ENCODE measurements at regions of chr19 and their contacts with region 1.

Region 1: GRCh38 chr19:58326914-58327726 is at the start of gene ZSCAN22:
- DNase-seq: peak; percentile 97
- ATAC-seq: peak; percentile 95
- H3K4me3 Mint-ChIP-seq: no peak within 1 kb of the TSS
- H3K27ac Mint-ChIP-seq: no peak within 1 kb of the TSS
- H3K4me1 Mint-ChIP-seq: peaks cover 4% of the 10 kb centered on the region; the same call in 1 of the 2 replicates
- H3K27me3 Mint-ChIP-seq: no peaks in the 10 kb centered on the region
- CTCF ChIP-seq: no peak
- total RNA-seq, gene ZSCAN22: 3.2 TPM in 3 replicates

Region 2: GRCh38 chr19:58285947-58286346 is 41.2 kb before region 1 on chr19:
- CTCF ChIA-PET with region 1: no interaction called
- POLR2A ChIA-PET with region 1: no interaction called
- DNase-seq: no peak
- ATAC-seq: no peak
- H3K4me3 Mint-ChIP-seq: no peak overlapping the region
- H3K27ac Mint-ChIP-seq: no peak overlapping the region
- H3K4me1 Mint-ChIP-seq: peaks cover 5% of the 10 kb centered on the region
- H3K27me3 Mint-ChIP-seq: no peaks in the 10 kb centered on the region
- CTCF ChIP-seq: no peak

Region 3: DNA sequence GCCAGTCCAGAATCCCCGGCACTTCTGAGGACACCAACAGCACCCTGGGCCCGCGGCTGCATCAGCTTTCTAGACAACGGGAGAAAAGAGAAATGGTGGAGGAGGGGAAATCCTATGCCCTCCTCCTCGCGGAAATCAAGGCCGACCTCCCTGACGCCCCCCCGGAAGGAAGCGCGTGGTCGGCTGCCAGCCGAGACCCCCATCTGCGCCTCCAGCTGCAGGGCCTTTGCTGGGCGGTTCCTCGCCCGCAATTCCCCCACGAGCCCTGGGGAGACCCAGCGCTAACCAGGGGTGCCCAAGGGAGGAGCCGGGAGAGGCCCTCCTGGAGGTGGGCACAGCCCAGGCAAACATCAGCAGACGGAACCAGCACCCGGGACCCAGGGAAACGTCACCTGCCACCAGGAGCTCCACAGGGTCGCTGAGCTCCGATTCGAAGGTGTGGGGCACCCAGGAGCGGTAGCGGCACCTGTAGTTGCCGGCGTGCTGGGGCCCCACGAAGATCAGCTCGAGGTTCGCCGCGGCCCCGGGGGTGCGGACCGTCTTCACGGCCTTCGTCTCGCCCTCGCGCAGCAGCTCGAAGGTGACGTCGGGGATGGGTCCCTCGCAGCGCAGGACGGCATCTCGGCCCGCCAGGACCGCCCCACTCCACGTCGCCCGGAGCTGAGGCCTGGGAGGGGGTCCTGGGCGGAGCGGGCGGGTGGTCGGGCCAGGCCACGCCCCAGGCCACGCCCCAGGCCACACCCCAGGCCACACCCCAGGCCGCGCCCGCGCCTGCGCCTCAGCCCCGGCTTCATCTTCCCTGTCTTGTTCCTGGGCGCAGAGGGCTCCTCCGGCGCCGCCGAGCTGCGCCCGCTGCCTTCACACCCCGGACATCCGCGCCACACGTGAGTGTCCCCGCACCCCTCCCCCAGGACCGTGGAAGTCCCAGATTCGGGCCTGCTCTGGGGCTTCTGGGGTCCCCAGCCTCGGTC is 20.1 kb after region 1 on chr19:
- CTCF ChIA-PET with region 1: interaction called, 10 read pairs
- POLR2A ChIA-PET with region 1: no interaction called
- DNase-seq: peak; percentile 67
- ATAC-seq: peak; percentile 96
- H3K4me3 Mint-ChIP-seq: peak overlapping the region; percentile 93
- H3K27ac Mint-ChIP-seq: no peak overlapping the region
- H3K4me1 Mint-ChIP-seq: peaks cover 3% of the 10 kb centered on the region; the same call in 1 of the 2 replicates
- H3K27me3 Mint-ChIP-seq: peaks cover 57% of the 10 kb centered on the region
- CTCF ChIP-seq: no peak

Region 4: GRCh38 chr19:58362272-58362994 is 35.3 kb after region 1 on chr19 and contains the start of gene ZNF497:
- CTCF ChIA-PET with region 1: interaction called, 12 read pairs
- POLR2A ChIA-PET with region 1: interaction called, 9 read pairs
- DNase-seq: peak; percentile 98
- ATAC-seq: peak; percentile 93
- H3K4me3 Mint-ChIP-seq: peak within 1 kb of the TSS; percentile 94
- H3K27ac Mint-ChIP-seq: peak within 1 kb of the TSS; percentile 96
- H3K4me1 Mint-ChIP-seq: peaks cover 6% of the 10 kb centered on the region; the same call in 1 of the 2 replicates
- H3K27me3 Mint-ChIP-seq: no peaks in the 10 kb centered on the region
- CTCF ChIP-seq: no peak
- total RNA-seq, gene ZNF497: 1.7 to 2.1 TPM (median 2.0 TPM) in 3 replicates

Region 5: GRCh38 chr19:58372311-58373133 is 45.4 kb after region 1 on chr19:
- CTCF ChIA-PET with region 1: no interaction called
- POLR2A ChIA-PET with region 1: interaction called, 10 read pairs
- DNase-seq: no peak
- ATAC-seq: peak; percentile 52
- H3K4me3 Mint-ChIP-seq: no peak overlapping the region
- H3K27ac Mint-ChIP-seq: 0 out of 2 replicates have a peak overlapping the region, but pooled peaks have one; percentile 54
- H3K4me1 Mint-ChIP-seq: peaks cover 2% of the 10 kb centered on the region; the same call in 1 of the 2 replicates
- H3K27me3 Mint-ChIP-seq: no peaks in the 10 kb centered on the region
- CTCF ChIP-seq: 0 out of 2 replicates have a peak, but pooled peaks have one; percentile 8

Measured in WTC11 (cell line).